Spleen (tissue), 13 donors: ENCODE measurements at regions of chr14 and their contacts with region 1.

Region 1: DNA sequence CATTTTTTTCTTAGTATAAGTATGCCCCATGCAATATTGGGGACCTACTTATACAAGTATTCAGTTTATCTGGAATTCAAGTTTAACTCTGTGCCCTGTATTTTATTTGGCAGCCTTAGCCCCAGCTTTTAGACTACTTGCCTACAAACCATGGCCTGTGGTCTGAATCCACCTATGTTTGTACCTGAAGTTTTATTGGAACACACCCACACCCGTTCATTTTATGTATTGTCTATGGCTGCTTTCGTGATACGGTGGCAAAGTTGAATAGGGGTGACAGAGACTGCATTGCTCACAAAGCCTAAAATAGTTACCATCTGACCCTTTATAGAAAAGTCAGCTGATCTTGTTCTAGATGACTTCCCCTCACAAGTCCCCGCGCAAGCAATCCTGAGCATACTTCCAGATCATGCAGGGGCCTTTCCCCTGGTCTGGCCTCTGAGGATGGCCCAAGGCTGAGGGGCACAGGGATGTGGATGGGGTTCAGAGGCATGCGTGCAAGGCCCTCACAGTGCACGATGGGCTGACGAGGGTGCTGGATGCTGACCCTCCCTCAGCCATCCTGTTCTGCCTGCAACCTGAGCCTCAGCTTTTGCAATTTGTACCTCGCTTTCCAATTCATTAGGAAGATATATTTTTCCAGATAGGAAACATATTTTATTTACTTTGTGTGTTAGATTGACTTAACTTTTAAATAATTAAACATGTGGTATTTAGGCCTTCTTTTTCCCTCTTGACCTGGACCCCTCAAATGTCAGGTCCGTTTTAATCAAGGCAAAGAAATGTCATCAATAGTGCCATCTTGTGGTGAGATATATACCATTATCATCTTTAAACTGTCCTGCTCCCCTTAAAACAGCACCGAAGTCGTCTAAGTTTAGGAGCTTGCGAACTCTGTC is 527.3 kb upstream of the CCDC196 start:
- DNase-seq: no peak
- H3K4me3 ChIP-seq: no peak overlapping the region
- H3K27ac ChIP-seq: no peak overlapping the region
- H3K4me1 ChIP-seq: peaks cover 5 to 30% (median 11%) of the 10 kb centered on the region in 6 donors
- H3K27me3 ChIP-seq: peaks cover 0 to 6% (median 0%) of the 10 kb centered on the region in 7 donors
- CTCF ChIP-seq: peak in 10 of 11 experiments; percentile 17 to 70 (median 49)
- POLR2A ChIP-seq: no peak

Region 2: GRCh38 chr14:65170768-65171507 is 788.0 kb before region 1 on chr14:
- intact Hi-C with region 1: loop called (anchors 5 kb)
- DNase-seq: peak; percentile 84
- H3K4me3 ChIP-seq: peak overlapping the region in 6 of 8 donors; percentile 2 to 63 (median 20)
- H3K27ac ChIP-seq: no peak overlapping the region
- H3K4me1 ChIP-seq: peaks cover 0 to 17% (median 12%) of the 10 kb centered on the region in 6 donors
- H3K27me3 ChIP-seq: peaks cover 0 to 17% (median 0%) of the 10 kb centered on the region in 7 donors
- CTCF ChIP-seq: peak in 5 of 11 experiments; percentile 13 to 47 (median 29)
- POLR2A ChIP-seq: no peak

Region 3: GRCh38 chr14:65412032-65412846 is 546.7 kb before region 1 on chr14 and contains the start of gene FUT8:
- intact Hi-C with region 1: loop called (anchors 10 kb)
- DNase-seq: peak; percentile 99
- H3K4me3 ChIP-seq: peak within 1 kb of the TSS; percentile 69 to 100 (median 87)
- H3K27ac ChIP-seq: peak within 1 kb of the TSS; percentile 91 to 97 (median 94)
- H3K4me1 ChIP-seq: peaks cover 9 to 47% (median 33%) of the 10 kb centered on the region in 6 donors
- H3K27me3 ChIP-seq: peaks cover 0 to 4% (median 0%) of the 10 kb centered on the region in 7 donors
- CTCF ChIP-seq: peak; percentile 15 to 67 (median 47)
- POLR2A ChIP-seq: peak; percentile 16 to 94 (median 88)
- total RNA-seq, gene FUT8: 41.9 to 75.1 (median 61.9) TPM

Region 4: DNA sequence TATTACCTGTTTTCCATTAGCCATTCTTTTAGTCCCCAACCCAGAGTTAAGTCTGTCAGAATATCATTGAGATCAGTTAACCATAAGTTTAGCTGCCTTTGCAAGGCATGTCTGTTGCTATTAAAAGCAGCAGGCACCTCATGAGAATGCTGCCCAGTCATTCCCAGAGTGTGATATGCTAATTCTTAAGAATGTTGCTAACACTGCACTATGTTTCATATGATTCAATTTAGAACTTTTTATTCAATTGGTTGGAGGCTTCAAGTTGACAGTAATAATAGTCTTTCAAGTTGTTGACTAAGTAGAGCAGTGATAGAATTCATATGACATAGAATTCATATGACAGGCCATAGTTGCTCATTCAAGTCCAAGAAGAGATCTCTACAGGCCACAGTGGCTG is 254.1 kb before region 1 on chr14:
- intact Hi-C with region 1: loop called (anchors 5 kb)
- DNase-seq: no peak
- H3K4me3 ChIP-seq: no peak overlapping the region
- H3K27ac ChIP-seq: no peak overlapping the region
- H3K4me1 ChIP-seq: no peaks in the 10 kb centered on the region
- H3K27me3 ChIP-seq: no peaks in the 10 kb centered on the region
- CTCF ChIP-seq: no peak
- POLR2A ChIP-seq: no peak

Region 5: DNA sequence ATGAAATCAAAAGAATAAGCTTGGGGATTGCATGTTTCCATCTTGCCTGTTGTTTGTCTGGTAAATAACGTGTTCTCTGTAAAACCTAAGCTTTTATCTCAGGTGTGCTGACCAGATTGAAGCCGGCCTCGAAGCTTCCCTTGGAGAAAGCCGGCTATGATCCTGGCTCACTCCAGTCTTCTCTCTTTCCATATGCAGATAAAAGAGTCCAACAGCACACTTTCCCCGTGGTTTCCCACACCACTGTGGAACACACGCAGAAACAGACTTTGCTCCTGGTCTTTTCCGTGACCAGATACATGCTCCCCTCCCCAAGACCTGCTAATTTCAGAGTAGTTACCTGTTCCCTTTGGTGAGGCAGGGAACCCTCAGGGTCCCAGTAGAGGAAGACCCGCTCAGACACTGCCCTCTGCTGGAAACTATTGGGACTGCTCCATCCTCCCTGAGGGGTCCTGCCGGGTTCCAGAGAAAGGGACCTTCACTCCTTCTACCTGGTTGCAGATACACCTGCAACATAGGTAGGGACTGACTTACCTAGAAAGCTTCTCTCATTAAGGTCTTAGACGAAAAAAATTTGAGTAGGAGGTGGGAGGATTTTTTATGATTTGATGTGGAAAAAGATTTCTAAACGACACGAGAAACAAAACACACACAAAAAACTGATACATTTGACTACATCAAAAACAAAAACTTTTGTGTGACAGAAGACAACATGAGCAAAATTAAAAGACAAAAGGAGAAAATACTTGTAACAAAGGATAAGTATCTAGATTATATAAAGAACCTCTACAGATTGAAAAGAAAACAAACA is 111.8 kb after region 1 on chr14:
- intact Hi-C with region 1: loop called (anchors 10 kb)
- DNase-seq: no peak
- H3K4me3 ChIP-seq: no peak overlapping the region
- H3K27ac ChIP-seq: no peak overlapping the region
- H3K4me1 ChIP-seq: peaks cover 0 to 3% (median 0%) of the 10 kb centered on the region in 6 donors
- H3K27me3 ChIP-seq: no peaks in the 10 kb centered on the region
- CTCF ChIP-seq: peak; percentile 45 to 88 (median 81)
- POLR2A ChIP-seq: no peak